Common myeloid progenitor, CD34-positive (primary cell): ENCODE measurements at regions of chr12 and their contacts with region 1.

Region 1: GRCh38 chr12:85424581-85425348 is 144.7 kb downstream of the ALX1 start:
- DNase-seq: peak; percentile 38 to 71 (median 67)
- H3K4me3 ChIP-seq: peak overlapping the region in 6 of 7 experiments; percentile 30 to 83 (median 66)
- H3K27ac ChIP-seq: no peak overlapping the region
- H3K4me1 ChIP-seq: peaks cover 0 to 6% (median 4%) of the 10 kb centered on the region in 4 experiments
- H3K27me3 ChIP-seq: peaks cover 2 to 9% (median 5%) of the 10 kb centered on the region in 5 experiments

Region 2: DNA sequence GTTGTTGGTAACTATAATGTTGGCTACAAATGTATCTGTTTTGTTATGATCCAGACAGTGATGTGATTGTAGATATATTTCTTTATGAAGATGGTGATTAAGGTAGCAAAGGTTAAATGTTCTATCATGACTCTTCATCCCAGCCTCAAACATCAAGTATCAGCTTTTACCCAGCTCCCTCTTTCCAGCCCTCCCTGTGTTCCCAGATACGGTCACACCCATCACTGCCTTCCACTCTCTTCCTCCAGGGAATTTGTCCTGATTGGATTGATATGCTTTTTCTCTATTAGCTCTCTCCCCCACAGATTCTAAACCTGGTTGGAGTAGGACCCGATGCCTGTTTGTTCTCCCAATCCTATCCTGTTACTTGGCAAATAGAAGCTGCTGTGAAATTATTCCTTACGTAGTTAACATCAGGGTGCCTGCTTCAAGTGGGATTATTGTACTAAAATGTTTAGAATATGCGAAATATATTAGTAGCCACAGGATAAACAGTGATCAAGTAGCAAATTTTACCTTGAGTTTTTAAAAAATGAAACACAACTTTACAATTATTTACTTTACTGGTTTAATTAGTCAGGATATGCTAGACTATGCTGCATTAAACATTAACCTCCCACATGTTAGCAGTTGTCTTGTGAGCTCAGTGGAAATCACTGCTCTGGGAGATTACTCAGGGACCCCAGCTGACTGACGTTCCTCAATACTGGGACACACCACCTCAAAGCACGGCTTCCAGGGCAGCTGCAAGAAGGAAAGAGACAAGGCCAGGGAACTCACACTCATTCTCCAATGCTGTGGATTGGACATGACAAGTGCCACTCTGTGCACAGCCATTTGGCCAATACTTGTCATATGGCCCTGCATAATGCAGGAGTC is 20.5 kb after region 1 on chr12:
- CTCF ChIA-PET with region 1: interaction called, 11 read pairs
- POLR2A ChIA-PET with region 1: no interaction called
- DNase-seq: no peak
- H3K4me3 ChIP-seq: no peak overlapping the region
- H3K27ac ChIP-seq: no peak overlapping the region
- H3K4me1 ChIP-seq: no peaks in the 10 kb centered on the region
- H3K27me3 ChIP-seq: peaks cover 0 to 2% (median 0%) of the 10 kb centered on the region in 5 experiments